ENCODE measurements at regions of chr6 and their contacts with region 1.

Region 1: GRCh38 chr6:30646458-30647241 is at the start of gene C6orf136:
- DNase-seq: peak in 8 of 9 donors; percentile 77 to 94 (median 92)
- ATAC-seq: peak; percentile 90
- H3K4me3 ChIP-seq: peak within 1 kb of the TSS; percentile 93
- H3K4me3 Mint-ChIP-seq: peak within 1 kb of the TSS; percentile 82 to 93 (median 88)
- H3K27ac ChIP-seq: peak within 1 kb of the TSS; percentile 91
- H3K27ac Mint-ChIP-seq: peak within 1 kb of the TSS; percentile 79 to 93 (median 91)
- H3K4me1 ChIP-seq: peaks cover 11 to 17% of the 10 kb centered on the region in 2 donors
- H3K4me1 Mint-ChIP-seq: peaks cover 24 to 38% (median 32%) of the 10 kb centered on the region in 7 donors
- H3K27me3 ChIP-seq: no peaks in the 10 kb centered on the region
- H3K27me3 Mint-ChIP-seq: no peaks in the 10 kb centered on the region
- total RNA-seq, gene C6orf136: 23.7 to 38.0 (median 32.1) TPM

Region 2: GRCh38 chr6:30626484-30627366 is 19.9 kb before region 1 on chr6 and contains the start of gene ATAT1:
- CTCF ChIA-PET with region 1: interaction called, 3 read pairs
- POLR2A ChIA-PET with region 1: interaction called, 5 read pairs
- intact Hi-C with region 1: loop called (anchors 1 to 2 kb)
- DNase-seq: peak; percentile 80 to 90 (median 85)
- ATAC-seq: peak; percentile 100
- H3K4me3 ChIP-seq: peak within 1 kb of the TSS; percentile 84
- H3K4me3 Mint-ChIP-seq: peak within 1 kb of the TSS; percentile 88 to 97 (median 92)
- H3K27ac ChIP-seq: peak within 1 kb of the TSS; percentile 92
- H3K27ac Mint-ChIP-seq: peak within 1 kb of the TSS; percentile 89 to 97 (median 96)
- H3K4me1 ChIP-seq: peaks cover 10 to 13% of the 10 kb centered on the region in 2 donors
- H3K4me1 Mint-ChIP-seq: peaks cover 15 to 35% (median 24%) of the 10 kb centered on the region in 7 donors
- H3K27me3 ChIP-seq: no peaks in the 10 kb centered on the region
- H3K27me3 Mint-ChIP-seq: no peaks in the 10 kb centered on the region
- total RNA-seq, gene ATAT1: 7.0 to 12.0 (median 9.5) TPM

Region 3: DNA sequence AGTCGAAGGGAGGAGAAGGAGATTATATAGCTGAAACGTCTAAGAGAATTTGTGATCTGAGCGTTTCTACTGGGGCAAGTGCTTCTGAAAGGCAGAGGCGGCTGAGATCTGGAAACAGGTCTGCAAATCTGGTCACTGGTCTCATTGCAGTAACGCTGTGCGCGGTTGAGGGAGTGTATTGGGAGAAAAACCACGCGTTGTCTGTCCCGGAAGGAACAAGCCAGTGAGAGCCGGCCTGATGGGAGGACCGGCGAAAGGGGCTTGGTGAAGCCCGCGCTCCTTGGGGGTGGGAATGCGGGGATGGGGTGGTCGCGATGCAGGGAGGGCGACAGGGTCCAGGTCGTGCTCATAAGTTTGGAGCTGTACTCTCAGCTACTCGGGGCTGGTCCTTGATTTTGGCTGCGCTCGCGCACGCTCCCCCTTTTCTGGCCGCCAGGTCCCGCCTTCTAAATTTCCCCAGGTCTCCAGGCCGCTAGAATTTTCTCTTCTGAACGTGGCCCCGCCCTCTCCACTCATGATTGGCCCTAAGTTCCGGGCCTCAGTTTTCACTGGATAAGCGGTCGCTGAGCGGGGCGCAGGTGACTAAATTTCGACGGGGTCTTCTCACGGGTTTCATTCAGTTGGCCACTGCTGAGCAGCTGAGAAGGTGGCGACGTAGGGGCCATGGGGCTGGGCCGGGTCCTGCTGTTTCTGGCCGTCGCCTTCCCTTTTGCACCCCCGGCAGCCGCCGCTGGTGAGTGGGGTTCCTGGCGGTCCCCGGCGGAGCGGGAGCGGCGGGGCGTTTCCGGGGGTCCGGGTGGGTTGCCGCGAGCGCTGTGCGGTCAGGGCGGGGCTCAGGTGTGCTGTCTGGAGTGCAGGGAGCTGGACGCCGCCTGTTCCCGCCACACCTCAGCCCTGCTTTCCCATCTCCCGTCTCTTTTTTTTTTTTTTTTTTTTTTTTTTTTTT is 851.2 kb after region 1 on chr6 and contains the start of gene MICB:
- CTCF ChIA-PET with region 1: no interaction called
- POLR2A ChIA-PET with region 1: no interaction called
- intact Hi-C with region 1: no loop called
- DNase-seq: peak; percentile 61 to 88 (median 79)
- ATAC-seq: peak; percentile 88
- H3K4me3 ChIP-seq: peak within 1 kb of the TSS; percentile 91
- H3K4me3 Mint-ChIP-seq: peak within 1 kb of the TSS; percentile 87 to 95 (median 91)
- H3K27ac ChIP-seq: peak within 1 kb of the TSS; percentile 86
- H3K27ac Mint-ChIP-seq: peak within 1 kb of the TSS; percentile 84 to 95 (median 88)
- H3K4me1 ChIP-seq: peaks cover 14 to 24% of the 10 kb centered on the region in 2 donors
- H3K4me1 Mint-ChIP-seq: peaks cover 40 to 75% (median 70%) of the 10 kb centered on the region in 7 donors
- H3K27me3 ChIP-seq: no peaks in the 10 kb centered on the region
- H3K27me3 Mint-ChIP-seq: no peaks in the 10 kb centered on the region
- total RNA-seq, gene MICB: 11.7 to 49.5 (median 13.3) TPM